Right cardiac atrium (tissue), 5 donors: ENCODE measurements at regions of chr5 and their contacts with region 1.

Region 1: GRCh38 chr5:36751886-36752285 is 124.7 kb upstream of the NIPBL start:
- DNase-seq: no peak
- ATAC-seq: no peak
- H3K4me3 ChIP-seq: no peak overlapping the region
- H3K27ac ChIP-seq: no peak overlapping the region
- H3K4me1 ChIP-seq: no peaks in the 10 kb centered on the region
- H3K27me3 ChIP-seq: no peaks in the 10 kb centered on the region

Region 2: GRCh38 chr5:36870399-36871040 is 118.6 kb after region 1 on chr5:
- intact Hi-C with region 1: loop called in 2 of 4 experiments (anchors 10 kb)
- DNase-seq: no peak
- ATAC-seq: peak; percentile 68 to 76
- H3K4me3 ChIP-seq: no peak overlapping the region
- H3K27ac ChIP-seq: no peak overlapping the region
- H3K4me1 ChIP-seq: no peaks in the 10 kb centered on the region
- H3K27me3 ChIP-seq: no peaks in the 10 kb centered on the region